ENCODE measurements at regions of chr3 and their contacts with region 1.

Region 1: GRCh38 chr3:194682694-194683310 is 2.9 kb upstream of the FAM43A start:
- DNase-seq: peak; percentile 79
- ATAC-seq: peak; percentile 47
- H3K4me3 Mint-ChIP-seq: no peak overlapping the region
- H3K27ac Mint-ChIP-seq: no peak overlapping the region
- H3K4me1 Mint-ChIP-seq: peaks cover 10% of the 10 kb centered on the region
- H3K27me3 Mint-ChIP-seq: peaks cover 46% of the 10 kb centered on the region
- CTCF ChIP-seq: peak; percentile 62

Region 2: DNA sequence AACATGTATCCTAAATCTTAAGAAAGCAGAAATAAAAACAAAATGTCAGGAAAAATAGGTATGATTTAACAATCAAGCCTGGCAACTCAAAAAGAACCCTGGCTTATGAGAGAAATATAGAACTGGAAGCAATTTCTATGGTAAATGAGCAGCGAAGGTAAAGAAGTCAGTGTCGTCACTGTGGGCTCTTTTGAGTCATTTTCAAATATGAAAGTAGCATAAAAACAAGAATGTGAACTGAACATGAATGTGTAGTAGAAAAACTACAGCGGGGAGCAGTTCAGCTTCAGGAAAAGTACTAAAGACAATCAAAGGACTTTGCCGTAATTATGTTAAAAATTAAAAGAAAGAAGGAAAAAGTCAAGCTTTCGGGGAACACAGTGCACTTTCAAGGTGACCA is 28.4 kb before region 1 on chr3:
- CTCF ChIA-PET with region 1: no interaction called
- POLR2A ChIA-PET with region 1: no interaction called
- DNase-seq: no peak
- ATAC-seq: no peak
- H3K4me3 Mint-ChIP-seq: no peak overlapping the region
- H3K27ac Mint-ChIP-seq: peak overlapping the region; percentile 70
- H3K4me1 Mint-ChIP-seq: peaks cover 9% of the 10 kb centered on the region
- H3K27me3 Mint-ChIP-seq: no peaks in the 10 kb centered on the region
- CTCF ChIP-seq: no peak

Region 3: GRCh38 chr3:194671900-194672808 is 10.6 kb before region 1 on chr3 and contains the start of gene LSG1:
- CTCF ChIA-PET with region 1: interaction called, 61 read pairs
- POLR2A ChIA-PET with region 1: interaction called, 9 read pairs
- DNase-seq: peak; percentile 87
- ATAC-seq: peak; percentile 98
- H3K4me3 Mint-ChIP-seq: peak within 1 kb of the TSS; percentile 100
- H3K27ac Mint-ChIP-seq: peak within 1 kb of the TSS; percentile 98
- H3K4me1 Mint-ChIP-seq: peaks cover 9% of the 10 kb centered on the region
- H3K27me3 Mint-ChIP-seq: peaks cover 24% of the 10 kb centered on the region
- CTCF ChIP-seq: peak; percentile 9; the same call in 1 of the 2 replicates
- total RNA-seq, gene LSG1: 42.9 to 45.8 TPM (median 44.1 TPM) in 3 replicates

Region 4: GRCh38 chr3:194769020-194769643 is 86.3 kb after region 1 on chr3:
- CTCF ChIA-PET with region 1: interaction called, 11 read pairs
- POLR2A ChIA-PET with region 1: interaction called, 3 read pairs
- DNase-seq: peak; percentile 96
- ATAC-seq: peak; percentile 100
- H3K4me3 Mint-ChIP-seq: peak overlapping the region; percentile 82
- H3K27ac Mint-ChIP-seq: no peak overlapping the region
- H3K4me1 Mint-ChIP-seq: peaks cover 18% of the 10 kb centered on the region
- H3K27me3 Mint-ChIP-seq: peaks cover 47% of the 10 kb centered on the region
- CTCF ChIP-seq: no peak

Region 5: DNA sequence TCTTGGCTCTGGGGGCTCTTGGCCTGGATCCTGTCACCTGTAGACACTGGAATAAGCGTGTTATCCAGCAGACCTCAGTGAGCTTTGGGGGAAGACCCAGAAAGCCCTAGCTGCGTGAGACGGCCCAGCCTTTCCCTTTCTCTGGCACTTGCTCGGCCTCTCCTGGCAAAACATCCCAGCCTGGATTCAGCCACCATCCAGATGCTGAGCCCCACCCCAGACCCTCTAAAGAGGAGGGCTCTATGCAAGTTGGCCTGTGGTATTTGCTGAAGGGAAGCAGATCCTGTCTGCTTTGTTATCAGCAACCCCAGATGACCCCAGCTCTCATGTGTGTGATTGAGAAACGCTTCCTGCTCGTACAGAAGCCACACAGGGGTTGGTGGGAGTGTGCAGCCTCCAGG is 270.0 kb after region 1 on chr3:
- CTCF ChIA-PET with region 1: interaction called, 31 read pairs
- POLR2A ChIA-PET with region 1: no interaction called
- DNase-seq: no peak
- ATAC-seq: peak; percentile 16; the same call in 1 of the 2 replicates
- H3K4me3 Mint-ChIP-seq: no peak overlapping the region
- H3K27ac Mint-ChIP-seq: no peak overlapping the region
- H3K4me1 Mint-ChIP-seq: peaks cover 2% of the 10 kb centered on the region; the same call in 1 of the 2 replicates
- H3K27me3 Mint-ChIP-seq: no peaks in the 10 kb centered on the region; the same call in 1 of the 2 replicates
- CTCF ChIP-seq: no peak

Region 6: DNA sequence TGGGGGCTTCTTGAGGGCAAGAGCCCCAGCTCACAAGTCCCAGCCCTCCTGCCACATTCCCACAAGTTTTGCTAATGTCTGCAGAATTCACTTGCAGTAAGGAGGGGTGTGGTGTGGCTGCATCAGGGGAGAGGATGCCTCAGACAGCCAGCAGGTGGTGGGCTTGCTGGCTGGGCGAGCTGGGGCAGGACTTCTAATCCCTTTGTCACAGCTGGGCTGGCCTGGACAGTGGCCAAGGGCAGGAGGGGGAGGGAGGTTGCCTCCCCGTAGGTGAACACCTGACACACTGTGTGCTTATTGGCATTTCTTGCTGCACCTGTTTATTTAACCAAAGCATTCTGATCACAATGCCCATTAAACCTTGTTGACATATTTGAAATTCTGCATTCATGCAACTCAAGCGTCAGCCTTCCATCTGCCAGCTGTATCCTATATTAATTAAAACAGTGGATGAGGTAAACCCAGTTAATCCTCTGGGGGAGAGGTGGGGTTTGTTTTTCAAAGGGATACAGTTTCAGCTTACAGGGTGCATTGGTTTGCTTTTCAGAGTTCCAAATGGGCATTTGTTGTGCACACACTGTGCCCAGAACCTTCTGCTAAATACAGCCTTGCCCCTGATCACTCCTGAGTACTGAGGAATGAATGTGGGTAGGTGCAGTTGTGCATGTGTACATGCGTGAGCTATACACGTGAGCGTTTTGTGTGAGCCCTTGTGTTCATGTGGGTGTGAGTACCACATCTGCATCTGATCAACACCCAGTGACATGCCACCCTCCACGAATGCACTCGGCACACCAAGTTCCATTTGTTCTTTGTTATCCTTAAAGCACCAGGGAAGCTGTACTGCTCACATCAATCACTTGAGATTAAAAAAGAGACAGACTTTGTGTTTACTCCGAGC is 319.4 kb after region 1 on chr3:
- CTCF ChIA-PET with region 1: interaction called, 18 read pairs
- POLR2A ChIA-PET with region 1: no interaction called
- DNase-seq: peak; percentile 68
- ATAC-seq: peak; percentile 90
- H3K4me3 Mint-ChIP-seq: no peak overlapping the region
- H3K27ac Mint-ChIP-seq: no peak overlapping the region
- H3K4me1 Mint-ChIP-seq: peaks cover 24% of the 10 kb centered on the region
- H3K27me3 Mint-ChIP-seq: no peaks in the 10 kb centered on the region
- CTCF ChIP-seq: no peak

Region 7: DNA sequence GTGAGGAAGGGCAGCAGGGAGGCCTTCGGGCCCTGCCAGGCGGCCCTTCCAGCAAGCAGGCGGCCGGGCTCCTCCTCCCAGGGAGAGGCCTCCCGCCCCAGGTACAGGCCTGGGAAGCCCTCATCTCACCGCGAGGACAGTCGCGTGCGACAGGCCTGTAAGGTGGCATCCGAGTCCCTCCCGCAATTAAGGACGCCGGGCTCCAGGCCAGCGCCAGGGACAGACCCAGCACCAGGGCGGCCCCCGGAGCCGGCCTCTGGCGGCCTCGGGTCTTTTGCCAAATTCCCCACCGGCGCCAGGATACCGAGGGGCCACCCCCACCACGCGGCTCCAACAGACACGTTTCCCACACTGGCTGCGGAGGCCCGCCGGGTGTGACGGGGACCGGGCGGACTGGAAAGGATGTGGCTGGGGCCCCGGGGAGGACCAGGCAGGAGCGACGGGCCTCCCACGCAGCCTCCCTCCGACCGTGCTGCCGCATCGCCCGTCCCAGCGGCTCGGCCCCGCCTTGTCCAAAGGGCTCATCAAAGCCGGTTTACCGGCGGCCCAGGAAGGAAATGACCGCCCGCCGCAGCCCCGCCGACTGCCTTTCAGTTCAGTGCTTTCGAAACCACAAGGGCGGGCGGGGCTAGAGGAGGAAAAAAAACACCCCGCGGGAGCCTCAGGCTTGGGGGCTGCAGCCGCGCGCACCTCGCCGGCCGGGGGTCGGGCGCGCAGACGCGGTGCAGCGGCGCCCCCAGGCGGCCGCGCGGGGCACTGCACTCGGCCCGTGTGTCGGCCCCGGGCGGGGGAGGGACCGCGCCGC is 576.9 kb after region 1 on chr3:
- CTCF ChIA-PET with region 1: interaction called, 16 read pairs
- POLR2A ChIA-PET with region 1: no interaction called
- DNase-seq: peak; percentile 88
- ATAC-seq: peak; percentile 66
- H3K4me3 Mint-ChIP-seq: peak overlapping the region; percentile 58
- H3K27ac Mint-ChIP-seq: no peak overlapping the region
- H3K4me1 Mint-ChIP-seq: peaks cover 46% of the 10 kb centered on the region
- H3K27me3 Mint-ChIP-seq: no peaks in the 10 kb centered on the region
- CTCF ChIP-seq: peak; percentile 85

Measured in WTC11 (cell line).